Activated CD4-positive, alpha-beta T cell treated with anti-CD3 and anti-CD28 coated beads for 36 hours (primary cell): ENCODE measurements at regions of chr14 and their contacts with region 1.

Region 1: DNA sequence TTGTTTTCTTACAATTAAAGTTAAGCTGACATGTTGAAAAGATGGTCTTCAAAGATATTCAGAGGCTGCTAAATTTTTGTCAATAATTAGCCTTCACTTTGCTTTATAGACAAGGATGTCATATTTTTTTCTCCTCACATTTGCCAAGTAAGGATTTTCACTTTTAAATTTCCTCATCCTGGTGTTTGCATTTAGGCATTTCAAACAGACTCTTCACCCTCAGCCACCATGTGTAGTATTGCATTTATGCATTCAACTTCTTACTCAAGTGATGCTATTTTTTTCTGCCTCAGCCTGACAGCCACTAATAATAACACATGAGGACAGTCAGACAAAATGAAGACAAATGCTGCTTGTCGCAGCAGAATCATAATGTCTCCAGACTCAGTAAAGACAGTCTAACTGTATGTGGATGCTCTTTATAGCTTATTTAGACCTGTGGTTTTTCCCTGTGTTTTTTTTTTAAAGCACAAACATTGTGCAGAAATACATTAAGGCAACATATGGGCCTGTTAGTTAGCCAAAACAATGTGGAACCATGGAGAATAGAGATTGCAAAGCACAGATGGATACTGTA is 481.5 kb downstream of the NPAS3 start:
- DNase-seq: no peak
- ATAC-seq: no peak
- H3K4me3 Mint-ChIP-seq: no peak overlapping the region
- H3K27ac Mint-ChIP-seq: no peak overlapping the region
- H3K4me1 Mint-ChIP-seq: no peaks in the 10 kb centered on the region
- H3K27me3 Mint-ChIP-seq: no peaks in the 10 kb centered on the region

Region 2: GRCh38 chr14:33198684-33199083 is 221.5 kb before region 1 on chr14:
- CTCF ChIA-PET with region 1: no interaction called
- POLR2A ChIA-PET with region 1: interaction called, 10 read pairs
- intact Hi-C with region 1: no loop called
- DNase-seq: no peak
- ATAC-seq: no peak
- H3K4me3 Mint-ChIP-seq: no peak overlapping the region
- H3K27ac Mint-ChIP-seq: no peak overlapping the region
- H3K4me1 Mint-ChIP-seq: no peaks in the 10 kb centered on the region
- H3K27me3 Mint-ChIP-seq: no peaks in the 10 kb centered on the region

Region 3: DNA sequence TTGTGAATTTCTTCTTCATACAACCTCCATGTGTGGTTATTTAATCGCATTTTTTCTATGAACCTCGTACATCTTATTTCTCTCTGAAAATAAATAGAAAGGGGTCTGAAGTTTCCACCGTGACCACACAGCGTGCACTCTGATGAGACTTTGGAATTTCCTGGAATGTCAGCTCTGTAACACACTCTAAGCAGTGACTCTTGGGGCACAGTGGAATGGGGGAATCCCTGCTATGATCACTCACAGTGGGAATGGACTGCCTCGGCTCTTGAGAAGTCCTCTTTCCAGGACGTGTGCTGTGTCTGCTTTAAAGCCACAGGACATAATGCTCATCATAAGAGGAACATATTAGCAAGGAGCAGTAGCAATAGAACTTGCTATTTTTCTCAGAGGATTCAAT is 114.5 kb after region 1 on chr14:
- CTCF ChIA-PET with region 1: no interaction called
- POLR2A ChIA-PET with region 1: no interaction called
- intact Hi-C with region 1: no loop called
- DNase-seq: no peak
- ATAC-seq: no peak
- H3K4me3 Mint-ChIP-seq: no peak overlapping the region
- H3K27ac Mint-ChIP-seq: no peak overlapping the region
- H3K4me1 Mint-ChIP-seq: no peaks in the 10 kb centered on the region
- H3K27me3 Mint-ChIP-seq: no peaks in the 10 kb centered on the region